ENCODE measurements at regions of chr2 and their contacts with region 1.

Region 1: DNA sequence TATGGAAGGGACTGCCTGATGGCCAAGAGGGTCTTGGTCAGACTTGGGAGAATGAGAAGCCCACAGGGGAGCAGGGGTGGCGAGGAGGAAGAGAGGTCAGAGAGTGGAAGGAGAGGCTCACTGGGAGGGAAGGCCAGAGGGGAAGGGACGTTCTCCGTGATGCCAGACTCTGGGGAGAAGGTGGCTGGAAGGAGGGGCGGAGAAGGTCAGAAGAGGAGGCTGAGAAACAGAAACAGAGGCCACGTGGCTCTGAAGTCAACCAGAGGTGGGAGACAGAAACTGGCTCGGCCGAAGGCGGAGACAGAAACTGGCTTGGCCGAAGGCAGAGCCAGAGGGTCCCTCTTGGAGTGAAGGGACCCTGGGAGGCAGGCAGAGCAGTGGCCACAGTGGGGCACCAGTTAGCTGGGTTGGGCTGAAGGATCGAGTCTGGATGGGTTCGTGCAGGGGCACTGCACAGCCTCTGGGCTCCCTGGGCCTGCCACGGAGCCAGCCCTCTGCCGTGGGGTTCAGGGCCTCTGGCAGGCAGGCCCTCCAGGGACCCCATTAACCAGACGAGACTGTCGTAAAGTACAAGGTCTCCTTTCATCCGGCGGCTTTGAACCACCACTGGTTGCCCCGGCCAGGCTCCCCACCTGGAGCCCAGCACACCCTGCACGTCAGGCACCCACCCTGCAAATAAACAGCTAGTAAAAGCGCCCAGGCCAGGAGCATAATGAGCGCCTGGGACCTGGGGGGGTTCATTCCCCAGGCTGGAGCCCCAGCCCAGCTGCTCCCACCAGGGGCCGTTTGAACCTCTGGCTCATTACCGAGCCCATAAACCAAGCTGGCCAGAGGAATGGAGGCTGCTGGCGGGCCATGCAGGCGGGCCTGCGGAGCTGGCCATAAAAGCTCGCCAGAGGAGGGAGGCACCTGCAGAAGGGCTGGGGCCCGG is 218.8 kb downstream of the DYSF start:
- DNase-seq: peak; percentile 7 to 68
- H3K4me3 ChIP-seq: no peak overlapping the region
- CTCF ChIP-seq: no peak
- POLR2A ChIP-seq: no peak

Region 2: GRCh38 chr2:70132244-70133126 is 1539.7 kb before region 1 on chr2:
- intact Hi-C with region 1: loop called (anchors 10 kb)
- DNase-seq: peak in 1 of 2 donors; percentile 58
- H3K4me3 ChIP-seq: no peak overlapping the region
- CTCF ChIP-seq: no peak
- POLR2A ChIP-seq: no peak

Region 3: DNA sequence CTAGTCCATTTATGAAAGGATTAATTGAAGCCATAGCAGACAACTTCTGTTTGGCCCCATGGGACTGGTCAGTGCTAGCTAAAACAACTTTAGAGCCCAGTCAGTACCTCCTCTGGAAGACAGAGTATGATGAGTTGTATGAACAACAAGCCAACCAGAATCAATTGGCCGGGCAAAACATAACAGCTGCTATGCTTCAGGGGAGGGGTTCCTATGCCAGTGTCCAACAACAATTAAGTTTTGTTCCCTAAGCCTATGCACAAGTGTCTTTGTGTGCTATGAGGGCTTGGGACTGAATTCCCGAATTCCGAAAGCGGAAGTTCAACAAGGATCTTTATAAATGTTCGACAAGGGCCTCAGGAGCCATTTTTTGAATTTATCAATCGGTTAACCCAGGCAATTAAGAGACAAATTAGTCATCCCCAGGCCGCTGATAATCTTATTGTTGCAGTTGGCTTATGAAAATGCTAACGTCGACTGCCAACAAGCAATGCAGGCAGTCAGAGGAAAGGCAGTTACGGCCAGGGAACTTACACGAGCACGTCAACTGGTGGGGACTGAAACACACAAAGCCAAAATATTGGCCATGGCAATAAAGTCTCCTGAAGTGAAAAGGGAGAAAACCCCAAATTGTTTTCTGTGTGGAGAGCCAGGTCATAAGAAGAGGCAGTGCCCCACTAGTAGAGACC is 282.6 kb before region 1 on chr2:
- intact Hi-C with region 1: no loop called
- DNase-seq: no peak
- H3K4me3 ChIP-seq: no peak overlapping the region
- CTCF ChIP-seq: no peak
- POLR2A ChIP-seq: no peak

Region 4: GRCh38 chr2:71466303-71467173 is 205.6 kb before region 1 on chr2:
- intact Hi-C with region 1: no loop called
- DNase-seq: peak in 1 of 2 donors; percentile 84
- H3K4me3 ChIP-seq: peak overlapping the region; percentile 42
- CTCF ChIP-seq: no peak
- POLR2A ChIP-seq: no peak

Measured in lower leg skin (tissue), 4 donors.